Pancreas (tissue), 10 donors: ENCODE measurements at regions of chr5 and their contacts with region 1.

Region 1: DNA sequence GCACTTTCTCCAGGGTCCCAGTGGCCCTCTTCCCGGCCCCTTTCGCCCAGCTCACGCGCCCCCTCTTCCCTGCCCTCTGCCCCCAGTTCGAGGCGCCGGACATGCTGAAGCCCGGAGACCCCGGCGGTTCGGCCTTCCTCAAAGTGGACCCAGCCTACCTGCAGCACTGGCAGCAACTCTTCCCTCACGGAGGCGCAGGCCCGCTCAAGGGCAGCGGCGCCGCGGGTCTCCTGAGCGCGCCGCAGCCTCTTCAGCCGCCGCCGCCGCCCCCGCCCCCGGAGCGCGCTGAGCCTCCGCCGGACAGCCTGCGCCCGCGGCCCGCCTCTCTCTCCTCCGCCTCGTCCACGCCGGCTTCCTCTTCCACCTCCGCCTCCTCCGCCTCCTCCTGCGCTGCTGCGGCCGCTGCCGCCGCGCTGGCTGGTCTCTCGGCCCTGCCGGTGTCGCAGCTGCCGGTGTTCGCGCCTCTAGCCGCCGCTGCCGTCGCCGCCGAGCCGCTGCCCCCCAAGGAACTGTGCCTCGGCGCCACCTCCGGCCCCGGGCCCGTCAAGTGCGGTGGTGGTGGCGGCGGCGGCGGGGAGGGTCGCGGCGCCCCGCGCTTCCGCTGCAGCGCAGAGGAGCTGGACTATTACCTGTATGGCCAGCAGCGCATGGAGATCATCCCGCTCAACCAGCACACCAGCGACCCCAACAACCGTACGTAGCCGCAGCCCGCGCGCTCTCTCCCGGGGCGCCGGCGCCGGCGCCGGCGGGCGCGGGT is 1.1 kb downstream of the PRDM6 start:
- DNase-seq: peak in 3 of 6 donors; percentile 48 to 82 (median 76)
- ATAC-seq: peak; percentile 51 to 74 (median 60)
- H3K4me3 ChIP-seq: peak overlapping the region; percentile 33 to 55 (median 40)
- H3K27ac ChIP-seq: no peak overlapping the region
- H3K4me1 ChIP-seq: peaks cover 0 to 13% (median 0%) of the 10 kb centered on the region in 3 donors
- H3K27me3 ChIP-seq: peaks cover 6 to 57% (median 16%) of the 10 kb centered on the region in 4 donors
- CTCF ChIP-seq: no peak

Region 2: DNA sequence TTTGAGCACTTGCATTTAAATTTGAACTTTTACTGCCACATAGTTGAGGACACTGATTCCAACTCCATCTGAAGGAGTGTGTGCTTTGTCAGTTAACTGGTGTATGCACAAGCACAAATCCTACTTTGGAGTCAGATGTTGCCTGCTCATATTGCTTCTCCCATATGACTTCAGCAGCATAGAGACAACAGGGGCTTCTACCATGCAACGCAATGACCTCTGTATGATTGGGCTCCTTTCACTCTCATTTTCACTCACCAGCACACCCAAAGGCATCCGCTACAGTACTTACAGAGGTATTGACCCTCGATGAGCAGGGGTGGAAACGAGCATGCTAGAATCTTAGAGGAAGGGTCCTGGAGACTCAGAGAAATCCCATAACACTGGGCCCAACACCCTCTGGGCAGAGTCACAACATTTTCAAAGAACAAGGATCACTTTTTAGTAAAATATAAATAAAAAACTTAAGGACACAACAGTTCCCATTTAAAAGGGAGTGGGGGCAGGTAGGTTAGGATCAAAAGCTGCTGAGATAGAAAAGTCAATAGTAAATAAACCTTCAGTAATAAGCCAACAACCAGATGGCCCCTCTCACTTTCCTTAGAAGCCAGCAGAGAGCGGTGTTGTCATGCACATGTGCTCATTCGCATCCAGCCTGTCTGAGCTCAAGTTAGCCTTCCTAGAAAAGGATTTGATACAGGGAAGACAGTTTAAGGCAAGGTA is 574.2 kb before region 1 on chr5:
- intact Hi-C with region 1: loop called in 1 of 3 experiments (anchors 10 kb)
- DNase-seq: peak in 3 of 6 donors; percentile 16 to 44 (median 24)
- ATAC-seq: peak; percentile 46 to 99 (median 94)
- H3K4me3 ChIP-seq: no peak overlapping the region
- H3K27ac ChIP-seq: no peak overlapping the region
- H3K4me1 ChIP-seq: no peaks in the 10 kb centered on the region
- H3K27me3 ChIP-seq: no peaks in the 10 kb centered on the region
- CTCF ChIP-seq: peak in 3 of 4 donors; percentile 37 to 46 (median 43)

Region 3: DNA sequence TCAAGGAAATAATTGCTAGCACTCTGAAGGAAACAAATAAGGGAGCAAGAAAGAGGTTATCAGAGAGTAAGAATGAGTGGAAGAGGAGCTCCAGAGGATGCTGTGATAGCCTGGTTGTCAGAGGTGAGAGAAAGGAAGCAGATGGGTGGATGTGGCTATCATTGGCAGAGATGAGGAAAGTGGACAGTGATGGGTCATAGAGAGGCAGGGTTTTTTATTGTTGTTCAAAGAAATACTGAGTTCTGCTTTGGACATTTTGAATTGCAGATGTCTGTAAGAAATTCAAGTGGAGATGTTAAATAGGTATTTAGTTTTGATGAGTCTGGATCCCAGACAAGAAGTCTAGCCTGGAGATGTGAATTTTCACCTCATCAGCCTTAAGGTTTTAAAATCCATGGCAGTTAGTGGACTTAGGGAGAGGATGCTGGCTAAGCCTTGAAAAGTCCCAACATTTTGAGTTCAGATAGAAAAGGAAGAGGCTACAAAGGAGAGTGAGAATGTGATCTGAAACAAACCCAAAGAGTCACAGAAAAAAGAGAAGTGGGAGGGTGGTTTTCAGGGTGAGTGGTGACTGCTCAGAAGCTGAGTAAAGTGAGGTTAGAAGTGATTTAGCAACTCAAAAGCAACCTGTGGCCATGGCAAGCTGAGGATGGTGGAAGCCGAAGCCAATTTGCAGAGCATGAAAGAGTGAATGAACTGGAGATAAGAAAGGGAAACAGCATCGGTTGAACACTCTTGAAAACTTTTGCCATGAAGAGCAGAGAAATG is 104.0 kb before region 1 on chr5:
- intact Hi-C with region 1: no loop called
- DNase-seq: no peak
- ATAC-seq: no peak
- H3K4me3 ChIP-seq: no peak overlapping the region
- H3K27ac ChIP-seq: no peak overlapping the region
- H3K4me1 ChIP-seq: no peaks in the 10 kb centered on the region
- H3K27me3 ChIP-seq: no peaks in the 10 kb centered on the region
- CTCF ChIP-seq: no peak